ENCODE measurements at regions of chr15 and their contacts with region 1.

Region 1: GRCh38 chr15:76840830-76841460 is 64.2 kb downstream of the SCAPER start:
- DNase-seq: no peak
- CTCF ChIP-seq: peak; percentile 55

Region 2: DNA sequence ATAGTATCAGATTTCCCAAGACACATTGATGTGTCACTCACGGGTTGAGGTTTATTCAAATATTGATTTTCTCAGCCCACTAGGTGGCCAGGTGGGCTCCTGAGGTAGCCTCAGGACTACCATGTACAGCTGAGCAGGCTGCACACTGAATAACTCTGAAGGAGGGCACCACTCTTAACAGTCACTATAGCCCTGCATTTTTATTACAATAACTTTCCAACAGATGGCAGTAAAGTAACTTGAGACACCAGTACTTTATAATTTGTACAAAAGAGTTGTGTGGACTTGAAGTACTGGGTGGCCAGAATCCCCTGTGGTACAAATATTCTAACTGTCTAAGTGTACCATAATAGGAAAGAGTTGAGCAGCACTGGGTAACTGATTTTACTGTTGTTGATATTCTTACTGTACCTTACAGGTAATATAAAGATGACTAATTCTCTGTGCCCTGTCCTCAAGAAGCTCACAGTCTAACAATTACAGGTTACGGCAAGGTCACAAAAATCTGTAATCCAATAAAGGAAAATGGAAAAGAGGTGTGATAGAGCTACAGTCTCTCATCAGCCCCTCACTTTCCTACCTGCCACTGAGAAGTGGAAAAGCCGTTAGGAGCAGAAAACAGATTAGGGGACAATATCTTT is 605.6 kb before region 1 on chr15:
- in situ Hi-C with region 1: loop called (anchors 10 kb)
- DNase-seq: no peak
- CTCF ChIP-seq: peak; percentile 44

Region 3: DNA sequence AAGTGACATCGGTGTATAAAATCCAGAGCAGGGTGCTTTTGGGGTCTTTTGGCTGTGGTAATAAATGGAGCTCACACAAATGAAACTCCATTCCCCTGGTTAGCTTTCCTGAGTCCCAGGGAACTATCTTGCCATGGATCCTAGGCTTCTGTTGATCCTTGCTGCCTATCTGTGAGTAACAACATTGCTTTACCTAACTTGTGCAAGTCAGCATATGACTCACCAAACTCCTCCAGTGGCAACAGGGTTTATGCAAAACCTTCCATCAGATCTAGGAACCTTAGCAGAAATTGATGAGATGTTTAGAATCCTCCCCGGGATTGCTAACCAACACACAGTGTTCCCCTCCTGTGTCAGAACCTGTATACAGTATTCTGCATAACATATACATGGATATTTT is 41.2 kb before region 1 on chr15:
- in situ Hi-C with region 1: no loop called
- DNase-seq: no peak
- CTCF ChIP-seq: no peak

Measured in GM13977 (cell line).